ENCODE measurements at regions of chr15 and their contacts with region 1.

Region 1: GRCh38 chr15:88546248-88547129 is at the start of gene DET1:
- H3K4me3 Mint-ChIP-seq: peak within 1 kb of the TSS; percentile 80
- H3K27ac Mint-ChIP-seq: peak within 1 kb of the TSS; percentile 83
- H3K4me1 Mint-ChIP-seq: no peaks in the 10 kb centered on the region
- H3K27me3 Mint-ChIP-seq: no peaks in the 10 kb centered on the region

Region 2: GRCh38 chr15:88467073-88467934 is 79.2 kb before region 1 on chr15 and contains the starts of genes MRPL46 and MRPS11:
- intact Hi-C with region 1: loop called (anchors 1 kb)
- H3K4me3 Mint-ChIP-seq: peak within 1 kb of the TSS; percentile 89
- H3K27ac Mint-ChIP-seq: peak within 1 kb of the TSS; percentile 95
- H3K4me1 Mint-ChIP-seq: peaks cover 23% of the 10 kb centered on the region
- H3K27me3 Mint-ChIP-seq: no peaks in the 10 kb centered on the region